ENCODE measurements at regions of chr12 and their contacts with region 1.

Region 1: DNA sequence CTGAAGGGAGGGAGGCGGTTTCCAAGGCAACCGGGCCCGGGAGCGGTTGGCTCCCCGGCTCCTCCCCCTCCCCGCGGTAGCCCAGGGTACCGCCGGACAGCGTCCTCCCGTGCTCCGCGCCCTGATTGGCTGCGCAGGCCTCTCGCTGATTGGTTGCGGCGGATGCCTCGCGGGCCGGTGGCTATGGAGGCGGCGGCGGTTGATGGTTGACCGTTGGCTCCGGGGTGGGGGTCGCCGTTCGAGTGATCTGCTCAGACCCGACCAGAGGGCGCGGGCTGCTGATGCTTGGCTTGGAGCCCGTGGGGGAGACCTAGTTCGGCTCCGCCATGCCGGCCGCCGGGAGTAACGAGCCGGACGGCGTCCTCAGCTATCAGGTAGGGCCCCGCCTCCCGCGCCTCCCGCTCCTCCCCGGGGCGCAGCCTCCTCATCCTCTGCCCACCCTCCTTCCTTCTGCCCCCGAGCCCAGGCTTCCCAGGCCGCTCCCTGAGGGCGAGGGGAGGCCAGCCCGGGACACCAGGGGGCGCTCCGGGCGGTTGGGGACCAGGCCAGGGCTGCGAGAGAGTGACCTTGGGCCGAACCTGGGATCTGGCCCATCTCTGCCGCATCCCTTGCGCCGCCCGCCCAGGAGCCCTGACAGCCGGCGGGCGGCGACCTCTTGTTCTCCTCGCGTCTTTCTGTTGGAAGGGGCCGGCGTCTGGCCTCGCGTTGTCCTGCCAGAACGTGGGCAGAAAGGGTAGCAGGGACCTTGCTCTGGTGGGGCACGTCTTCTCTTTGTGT is at the start of gene SLC4A8:
- DNase-seq: no peak
- ATAC-seq: peak; percentile 98
- H3K4me3 ChIP-seq: peak within 1 kb of the TSS; percentile 71
- H3K27ac ChIP-seq: no peak within 1 kb of the TSS
- H3K4me1 ChIP-seq: peaks cover 3% of the 10 kb centered on the region; the same call in 1 of the 2 replicates
- H3K27me3 ChIP-seq: no peaks in the 10 kb centered on the region
- CTCF ChIP-seq: peak; percentile 72 to 88 (median 74)
- EP300 ChIP-seq: no peak
- POLR2A ChIP-seq: no peak
- RAD21 ChIP-seq: peak; percentile 74
- polyA plus RNA-seq, gene SLC4A8: 1.4 to 2.0 TPM

Region 2: GRCh38 chr12:51351913-51352532 is 72.8 kb before region 1 on chr12:
- CTCF ChIA-PET with region 1: no interaction called
- POLR2A ChIA-PET with region 1: no interaction called
- RAD21 ChIA-PET with region 1: no interaction called
- SMC1A ChIA-PET with region 1: no interaction called
- in situ Hi-C with region 1: no loop called
- intact Hi-C with region 1: no loop called
- DNase-seq: no peak
- ATAC-seq: peak; percentile 60; the same call in 2 of the 3 replicates
- H3K4me3 ChIP-seq: no peak overlapping the region
- H3K27ac ChIP-seq: no peak overlapping the region
- H3K4me1 ChIP-seq: peaks cover 3% of the 10 kb centered on the region
- H3K27me3 ChIP-seq: no peaks in the 10 kb centered on the region
- CTCF ChIP-seq: peak; percentile 50 to 64 (median 64); a peak in 5 of 6 replicates
- EP300 ChIP-seq: no peak
- POLR2A ChIP-seq: no peak
- RAD21 ChIP-seq: peak; percentile 66

Region 3: GRCh38 chr12:51391283-51392162 is 33.3 kb before region 1 on chr12 and contains the start of gene GALNT6:
- CTCF ChIA-PET with region 1: interaction called, 10 read pairs
- POLR2A ChIA-PET with region 1: no interaction called
- RAD21 ChIA-PET with region 1: interaction called, 3 read pairs
- SMC1A ChIA-PET with region 1: interaction called, 16 read pairs
- in situ Hi-C with region 1: no loop called
- intact Hi-C with region 1: no loop called
- DNase-seq: no peak
- ATAC-seq: peak; percentile 73
- H3K4me3 ChIP-seq: peak within 1 kb of the TSS; percentile 96
- H3K27ac ChIP-seq: peak within 1 kb of the TSS; percentile 74
- H3K4me1 ChIP-seq: peaks cover 51% of the 10 kb centered on the region
- H3K27me3 ChIP-seq: no peaks in the 10 kb centered on the region
- CTCF ChIP-seq: no peak
- EP300 ChIP-seq: no peak
- POLR2A ChIP-seq: peak; percentile 85
- RAD21 ChIP-seq: no peak
- polyA plus RNA-seq, gene GALNT6: 6.6 to 11.4 TPM

Region 4: DNA sequence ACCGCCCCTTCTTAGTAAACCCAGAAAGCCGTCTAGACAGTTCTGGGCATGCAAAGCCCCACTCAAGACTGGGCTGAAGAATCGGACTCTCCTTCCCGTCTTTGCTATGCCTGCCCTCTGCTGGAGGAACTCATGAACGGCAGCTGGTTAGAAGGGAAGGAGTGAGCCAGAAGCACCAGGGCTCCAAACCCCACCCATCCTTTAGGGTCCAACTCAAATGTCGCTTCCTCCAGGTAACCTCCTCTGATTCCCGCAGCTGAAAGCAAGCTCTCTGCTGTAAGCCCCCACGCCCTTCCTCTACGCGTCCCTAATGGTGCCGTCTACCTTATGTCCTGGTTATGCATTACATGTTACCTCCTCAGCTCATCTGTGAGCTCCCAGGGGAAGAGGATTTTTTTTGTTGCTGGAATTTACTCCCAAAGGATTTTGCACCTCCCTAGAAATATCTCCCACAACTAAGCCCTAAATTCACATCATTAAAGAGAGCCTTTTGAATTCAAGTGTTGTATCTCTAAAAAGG is 107.2 kb after region 1 on chr12:
- CTCF ChIA-PET with region 1: interaction called, 183 read pairs
- POLR2A ChIA-PET with region 1: no interaction called
- RAD21 ChIA-PET with region 1: interaction called, 52 read pairs
- SMC1A ChIA-PET with region 1: interaction called, 57 read pairs
- in situ Hi-C with region 1: loop called (anchors 5 kb)
- intact Hi-C with region 1: loop called (anchors 1 kb)
- DNase-seq: peak; percentile 24
- ATAC-seq: peak; percentile 98
- H3K4me3 ChIP-seq: no peak overlapping the region
- H3K27ac ChIP-seq: no peak overlapping the region
- H3K4me1 ChIP-seq: no peaks in the 10 kb centered on the region
- H3K27me3 ChIP-seq: peaks cover 0 to 2% of the 10 kb centered on the region in 2 experiments; a peak in 1 of 4 replicates
- CTCF ChIP-seq: peak; percentile 88 to 94 (median 93); a peak in 5 of 6 replicates
- EP300 ChIP-seq: no peak
- POLR2A ChIP-seq: no peak
- RAD21 ChIP-seq: peak; percentile 99

Region 5: GRCh38 chr12:51590347-51591019 is 165.6 kb after region 1 on chr12:
- CTCF ChIA-PET with region 1: interaction called, 4 read pairs
- POLR2A ChIA-PET with region 1: no interaction called
- RAD21 ChIA-PET with region 1: no interaction called
- SMC1A ChIA-PET with region 1: no interaction called
- in situ Hi-C with region 1: no loop called
- intact Hi-C with region 1: loop called (anchors 5 kb)
- DNase-seq: no peak
- ATAC-seq: peak; percentile 93
- H3K4me3 ChIP-seq: peak overlapping the region; percentile 16; the same call in 1 of the 2 replicates
- H3K27ac ChIP-seq: no peak overlapping the region
- H3K4me1 ChIP-seq: peaks cover 6% of the 10 kb centered on the region
- H3K27me3 ChIP-seq: peaks cover 4 to 14% of the 10 kb centered on the region in 2 experiments
- CTCF ChIP-seq: peak; percentile 44 to 47 (median 46); a peak in 5 of 6 replicates
- EP300 ChIP-seq: no peak
- POLR2A ChIP-seq: no peak
- RAD21 ChIP-seq: 0 out of 2 replicates have a peak, but pooled peaks have one; percentile 11

Region 6: DNA sequence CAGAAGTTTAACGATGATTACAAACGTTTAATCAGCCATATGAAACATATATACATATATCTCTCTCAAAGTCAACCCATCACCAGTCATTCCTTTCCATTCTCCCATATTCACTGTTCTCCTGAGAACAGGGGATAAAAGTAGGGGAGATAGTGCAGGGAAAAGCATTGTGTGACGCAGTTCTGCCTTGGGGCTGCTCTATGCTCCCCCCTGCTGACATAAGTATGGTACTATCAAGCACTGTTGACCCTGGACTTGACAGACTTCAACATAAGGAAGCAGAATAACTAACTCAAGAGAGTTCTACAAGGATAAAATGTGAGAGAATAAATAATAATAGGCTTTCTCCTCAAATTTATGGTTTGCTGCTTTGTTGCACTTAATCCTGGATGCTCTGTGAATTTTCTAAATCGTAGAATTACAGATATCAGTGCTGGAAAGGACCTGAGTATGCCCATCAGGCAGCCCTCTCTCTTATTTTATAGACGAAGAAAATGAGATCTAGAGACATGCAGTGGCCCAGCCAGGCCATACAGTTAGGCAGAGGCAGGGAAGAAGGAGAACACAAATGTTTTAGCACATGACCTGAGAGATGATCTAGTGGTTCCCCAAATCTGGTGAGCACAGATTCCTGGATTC is 253.4 kb after region 1 on chr12:
- CTCF ChIA-PET with region 1: interaction called, 12 read pairs
- POLR2A ChIA-PET with region 1: no interaction called
- RAD21 ChIA-PET with region 1: interaction called, 5 read pairs
- SMC1A ChIA-PET with region 1: no interaction called
- in situ Hi-C with region 1: no loop called
- intact Hi-C with region 1: loop called (anchors 2 kb)
- DNase-seq: no peak
- ATAC-seq: peak; percentile 83
- H3K4me3 ChIP-seq: no peak overlapping the region
- H3K27ac ChIP-seq: no peak overlapping the region
- H3K4me1 ChIP-seq: no peaks in the 10 kb centered on the region
- H3K27me3 ChIP-seq: no peaks in the 10 kb centered on the region; a peak in 1 of 4 replicates
- CTCF ChIP-seq: peak; percentile 60 to 75 (median 71)
- EP300 ChIP-seq: no peak
- POLR2A ChIP-seq: no peak
- RAD21 ChIP-seq: peak; percentile 45

Region 7: GRCh38 chr12:51695241-51696010 is 270.6 kb after region 1 on chr12:
- CTCF ChIA-PET with region 1: no interaction called
- POLR2A ChIA-PET with region 1: no interaction called
- RAD21 ChIA-PET with region 1: no interaction called
- SMC1A ChIA-PET with region 1: no interaction called
- in situ Hi-C with region 1: no loop called
- intact Hi-C with region 1: no loop called
- DNase-seq: no peak
- ATAC-seq: no peak
- H3K4me3 ChIP-seq: no peak overlapping the region
- H3K27ac ChIP-seq: no peak overlapping the region
- H3K4me1 ChIP-seq: no peaks in the 10 kb centered on the region
- H3K27me3 ChIP-seq: peaks cover 0 to 1% of the 10 kb centered on the region in 2 experiments; a peak in 2 of 4 replicates
- CTCF ChIP-seq: no peak
- EP300 ChIP-seq: no peak
- POLR2A ChIP-seq: no peak
- RAD21 ChIP-seq: no peak

Region 8: GRCh38 chr12:51871126-51871525 is 446.3 kb after region 1 on chr12:
- CTCF ChIA-PET with region 1: interaction called, 5 read pairs
- POLR2A ChIA-PET with region 1: no interaction called
- RAD21 ChIA-PET with region 1: interaction called, 3 read pairs
- SMC1A ChIA-PET with region 1: interaction called, 4 read pairs
- in situ Hi-C with region 1: loop called (anchors 10 kb)
- intact Hi-C with region 1: loop called (anchors 1 kb)
- DNase-seq: no peak
- ATAC-seq: no peak
- H3K4me3 ChIP-seq: no peak overlapping the region
- H3K27ac ChIP-seq: no peak overlapping the region
- H3K4me1 ChIP-seq: no peaks in the 10 kb centered on the region
- H3K27me3 ChIP-seq: peaks cover 3 to 6% of the 10 kb centered on the region in 2 experiments
- CTCF ChIP-seq: no peak
- EP300 ChIP-seq: no peak
- POLR2A ChIP-seq: no peak
- RAD21 ChIP-seq: no peak

Region 9: GRCh38 chr12:51941011-51941581 is 516.2 kb after region 1 on chr12:
- CTCF ChIA-PET with region 1: no interaction called
- POLR2A ChIA-PET with region 1: no interaction called
- RAD21 ChIA-PET with region 1: no interaction called
- SMC1A ChIA-PET with region 1: no interaction called
- in situ Hi-C with region 1: no loop called
- intact Hi-C with region 1: no loop called
- DNase-seq: no peak
- ATAC-seq: no peak
- H3K4me3 ChIP-seq: no peak overlapping the region
- H3K27ac ChIP-seq: no peak overlapping the region
- H3K4me1 ChIP-seq: no peaks in the 10 kb centered on the region
- H3K27me3 ChIP-seq: peaks cover 0 to 1% of the 10 kb centered on the region in 2 experiments; a peak in 2 of 4 replicates
- CTCF ChIP-seq: no peak
- EP300 ChIP-seq: no peak
- POLR2A ChIP-seq: no peak
- RAD21 ChIP-seq: no peak

Region 10: GRCh38 chr12:51980051-51980808 is 555.4 kb after region 1 on chr12:
- CTCF ChIA-PET with region 1: interaction called, 3 read pairs
- POLR2A ChIA-PET with region 1: no interaction called
- RAD21 ChIA-PET with region 1: no interaction called
- SMC1A ChIA-PET with region 1: no interaction called
- in situ Hi-C with region 1: no loop called
- intact Hi-C with region 1: loop called (anchors 10 kb)
- DNase-seq: no peak
- ATAC-seq: peak; percentile 98
- H3K4me3 ChIP-seq: no peak overlapping the region
- H3K27ac ChIP-seq: no peak overlapping the region
- H3K4me1 ChIP-seq: no peaks in the 10 kb centered on the region; the same call in 1 of the 2 replicates
- H3K27me3 ChIP-seq: peaks cover 0 to 11% of the 10 kb centered on the region in 2 experiments; a peak in 2 of 4 replicates
- CTCF ChIP-seq: peak; percentile 95 to 97 (median 96)
- EP300 ChIP-seq: no peak
- POLR2A ChIP-seq: no peak
- RAD21 ChIP-seq: peak; percentile 90